ENCODE measurements at regions of chr17 and their contacts with region 1.

Region 1: DNA sequence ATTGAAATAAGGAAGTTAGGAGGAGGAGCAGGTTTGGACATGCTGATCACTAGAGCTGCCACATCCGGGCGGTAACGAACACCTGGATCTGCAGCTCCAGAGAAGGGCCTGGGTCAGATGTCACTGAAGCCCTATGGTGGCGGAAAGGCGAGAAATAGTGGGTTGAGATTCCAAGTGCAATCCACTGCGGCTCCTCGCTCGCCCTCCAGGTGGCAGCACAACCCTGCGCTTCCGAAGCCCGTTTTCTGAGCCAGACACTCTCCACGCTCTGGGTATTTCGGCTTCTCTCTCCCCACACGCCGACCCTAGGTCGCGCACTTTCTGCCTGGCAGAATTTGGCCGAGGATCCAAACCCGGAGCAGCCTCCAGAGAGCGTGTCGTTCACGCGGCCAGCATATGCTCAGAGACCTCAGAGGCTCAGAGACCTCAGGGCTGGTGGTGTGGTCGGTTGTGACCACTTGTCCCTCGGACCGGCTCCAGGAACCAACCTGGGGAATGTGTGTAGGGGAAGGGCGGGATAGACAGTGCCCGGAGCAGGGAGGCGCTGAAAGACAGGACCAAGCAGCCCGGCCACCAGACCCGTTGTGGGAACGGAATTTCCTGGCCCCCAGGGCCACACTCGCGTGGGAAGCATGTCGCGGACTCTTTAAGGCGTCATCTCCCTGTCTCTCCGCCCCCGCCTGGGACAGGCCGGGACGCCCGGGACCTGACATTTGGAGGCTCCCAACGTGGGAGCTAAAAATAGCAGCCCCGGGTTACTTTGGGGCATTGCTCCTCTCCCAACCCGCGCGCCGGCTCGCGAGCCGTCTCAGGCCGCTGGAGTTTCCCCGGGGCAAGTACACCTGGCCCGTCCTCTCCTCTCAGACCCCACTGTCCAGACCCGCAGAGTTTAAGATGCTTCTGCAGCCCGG is 744 bp upstream of the SLC2A4 start:
- DNase-seq: peak; percentile 95
- ATAC-seq: peak; percentile 83
- H3K4me3 Mint-ChIP-seq: peak overlapping the region; percentile 82
- H3K27ac Mint-ChIP-seq: peak overlapping the region; percentile 94
- H3K4me1 Mint-ChIP-seq: peaks cover 20% of the 10 kb centered on the region
- H3K27me3 Mint-ChIP-seq: peaks cover 21% of the 10 kb centered on the region
- CTCF ChIP-seq: peak; percentile 77

Region 2: DNA sequence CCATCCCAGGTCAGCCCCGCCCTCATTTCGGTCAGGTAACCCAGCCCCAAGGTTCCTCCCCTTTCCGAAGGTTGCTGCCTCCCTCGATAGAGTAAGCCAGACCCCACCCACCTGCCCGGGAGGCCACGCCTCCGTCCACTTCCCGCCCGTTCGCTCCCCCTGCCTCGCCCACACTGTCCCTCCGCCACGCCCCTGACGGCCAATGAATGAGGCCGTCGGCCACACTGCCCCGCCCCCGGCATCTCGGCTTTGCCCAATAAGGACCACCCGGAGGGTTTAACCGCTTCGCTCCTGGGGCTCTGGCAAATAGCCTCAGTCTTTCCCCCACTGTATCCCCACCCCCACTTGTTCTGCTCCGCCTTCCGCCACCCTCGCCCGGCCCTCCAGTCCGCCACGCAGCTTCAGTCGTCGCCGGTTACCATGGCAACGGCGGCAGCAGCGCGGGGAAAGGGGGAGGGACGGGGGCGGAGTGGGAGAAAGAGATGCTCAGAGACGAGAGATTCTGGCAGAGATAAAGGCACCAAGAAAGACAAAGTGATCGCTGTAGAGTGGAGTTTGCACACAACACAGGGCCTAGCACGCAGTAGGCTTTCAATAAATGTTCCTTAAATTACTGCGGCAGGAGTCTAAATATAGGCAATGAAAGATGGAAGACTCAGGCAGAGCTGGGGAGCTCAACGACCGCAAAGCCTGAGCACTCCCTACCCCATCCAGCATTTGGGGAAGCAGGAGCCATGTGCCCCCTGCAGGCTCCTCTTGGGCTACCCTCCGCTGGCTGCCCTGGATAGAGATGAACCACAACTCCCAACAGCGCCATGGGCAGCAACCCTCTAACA is 66.3 kb before region 1 on chr17:
- CTCF ChIA-PET with region 1: interaction called, 17 read pairs
- POLR2A ChIA-PET with region 1: no interaction called
- DNase-seq: peak; percentile 100
- ATAC-seq: peak; percentile 77
- H3K4me3 Mint-ChIP-seq: peak overlapping the region; percentile 86
- H3K27ac Mint-ChIP-seq: peak overlapping the region; percentile 98
- H3K4me1 Mint-ChIP-seq: peaks cover 61% of the 10 kb centered on the region
- H3K27me3 Mint-ChIP-seq: peaks cover 4% of the 10 kb centered on the region; the same call in 1 of the 2 replicates
- CTCF ChIP-seq: no peak

Region 3: GRCh38 chr17:7239091-7240027 is 41.4 kb before region 1 on chr17 and contains the start of gene PHF23:
- CTCF ChIA-PET with region 1: interaction called, 21 read pairs
- POLR2A ChIA-PET with region 1: interaction called, 8 read pairs
- DNase-seq: peak; percentile 99
- ATAC-seq: peak; percentile 73
- H3K4me3 Mint-ChIP-seq: peak within 1 kb of the TSS; percentile 95
- H3K27ac Mint-ChIP-seq: peak within 1 kb of the TSS; percentile 93
- H3K4me1 Mint-ChIP-seq: peaks cover 39% of the 10 kb centered on the region
- H3K27me3 Mint-ChIP-seq: no peaks in the 10 kb centered on the region
- CTCF ChIP-seq: no peak
- total RNA-seq, gene PHF23: 45.8 to 50.1 TPM (median 49.1 TPM) in 3 replicates

Region 4: DNA sequence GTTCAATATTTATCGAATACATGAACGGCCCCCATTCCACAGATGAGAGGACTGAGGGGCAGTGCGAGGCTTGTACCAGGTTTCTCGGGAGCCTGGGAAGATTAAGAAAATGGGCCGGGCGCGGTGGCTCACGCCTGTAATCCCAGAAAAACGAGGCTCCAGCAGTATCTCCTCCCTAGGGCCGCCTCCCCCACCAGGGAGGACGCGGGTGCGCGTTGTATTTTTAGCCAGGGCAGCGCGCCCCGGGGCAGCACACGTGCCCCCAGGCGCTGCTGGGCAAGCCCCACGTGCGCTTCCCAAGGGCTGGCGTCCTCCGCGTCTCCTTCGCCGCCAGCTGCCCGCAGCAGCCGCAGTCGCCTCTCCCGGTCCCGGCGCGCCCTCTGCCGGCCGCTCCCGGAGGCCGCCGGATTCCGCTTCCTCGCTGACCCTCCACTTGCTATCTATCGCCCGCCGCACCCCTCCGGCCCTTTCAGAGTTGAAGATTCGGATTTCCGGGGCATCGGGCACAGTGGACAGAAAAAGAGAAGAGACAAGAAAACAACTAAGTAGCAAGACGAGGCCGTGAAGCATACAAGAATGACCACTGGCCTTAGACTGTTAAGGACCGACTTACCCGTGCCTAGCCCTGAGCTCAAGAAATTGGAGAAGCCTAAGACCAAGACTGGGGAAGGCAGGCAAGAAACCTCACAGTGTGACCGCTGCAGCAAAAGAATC is 15.6 kb after region 1 on chr17:
- CTCF ChIA-PET with region 1: interaction called, 119 read pairs
- POLR2A ChIA-PET with region 1: interaction called, 7 read pairs
- DNase-seq: peak; percentile 94
- ATAC-seq: peak; percentile 27
- H3K4me3 Mint-ChIP-seq: peak overlapping the region; percentile 70
- H3K27ac Mint-ChIP-seq: no peak overlapping the region
- H3K4me1 Mint-ChIP-seq: peaks cover 23% of the 10 kb centered on the region
- H3K27me3 Mint-ChIP-seq: peaks cover 76% of the 10 kb centered on the region
- CTCF ChIP-seq: peak; percentile 90; the same call in 1 of the 2 replicates

Region 5: DNA sequence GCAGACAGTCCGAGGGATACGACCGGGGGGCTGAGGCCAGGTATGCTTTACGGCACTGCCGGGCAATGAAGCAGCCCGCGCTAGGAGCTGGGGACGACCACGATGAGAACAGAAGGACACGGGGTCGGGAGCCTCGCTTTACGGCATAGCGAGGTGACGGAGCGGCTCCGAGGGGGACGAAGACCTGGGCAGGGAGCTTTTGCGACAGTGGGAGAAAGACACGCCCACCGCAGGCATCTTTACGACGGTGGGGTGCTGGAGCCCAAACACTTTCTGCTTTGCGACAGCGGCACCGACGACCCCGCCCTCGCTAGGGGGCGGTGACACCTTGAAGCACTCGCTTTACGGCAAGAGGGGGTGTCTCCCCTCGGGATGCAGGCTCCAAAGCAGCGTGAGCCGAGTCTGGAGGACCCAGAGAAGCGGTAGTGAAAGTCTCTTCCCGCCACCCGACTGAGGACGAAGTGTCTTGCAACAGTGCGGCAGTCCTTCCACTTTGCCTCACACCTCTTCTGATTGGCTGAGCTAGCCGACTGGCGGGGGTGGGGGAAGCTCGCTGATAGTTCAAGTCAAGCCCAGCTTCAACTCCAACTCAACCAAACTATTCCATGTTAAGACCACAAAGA is 48.7 kb after region 1 on chr17:
- CTCF ChIA-PET with region 1: interaction called, 24 read pairs
- POLR2A ChIA-PET with region 1: interaction called, 4 read pairs
- DNase-seq: peak; percentile 98
- ATAC-seq: peak; percentile 73
- H3K4me3 Mint-ChIP-seq: peak overlapping the region; percentile 93
- H3K27ac Mint-ChIP-seq: peak overlapping the region; percentile 100
- H3K4me1 Mint-ChIP-seq: peaks cover 24% of the 10 kb centered on the region
- H3K27me3 Mint-ChIP-seq: no peaks in the 10 kb centered on the region
- CTCF ChIP-seq: no peak

Region 6: GRCh38 chr17:7351665-7352501 is 71.1 kb after region 1 on chr17 and contains the start of gene KCTD11:
- CTCF ChIA-PET with region 1: interaction called, 10 read pairs
- POLR2A ChIA-PET with region 1: interaction called, 3 read pairs
- DNase-seq: peak; percentile 89
- ATAC-seq: peak; percentile 38
- H3K4me3 Mint-ChIP-seq: peak within 1 kb of the TSS; percentile 81
- H3K27ac Mint-ChIP-seq: peak within 1 kb of the TSS; percentile 60; the same call in 1 of the 2 replicates
- H3K4me1 Mint-ChIP-seq: peaks cover 33% of the 10 kb centered on the region
- H3K27me3 Mint-ChIP-seq: peaks cover 7% of the 10 kb centered on the region
- CTCF ChIP-seq: no peak
- total RNA-seq, gene KCTD11: 8.1 to 9.0 TPM (median 8.2 TPM) in 3 replicates